ENCODE measurements at regions of chr4 and their contacts with region 1.

Region 1: DNA sequence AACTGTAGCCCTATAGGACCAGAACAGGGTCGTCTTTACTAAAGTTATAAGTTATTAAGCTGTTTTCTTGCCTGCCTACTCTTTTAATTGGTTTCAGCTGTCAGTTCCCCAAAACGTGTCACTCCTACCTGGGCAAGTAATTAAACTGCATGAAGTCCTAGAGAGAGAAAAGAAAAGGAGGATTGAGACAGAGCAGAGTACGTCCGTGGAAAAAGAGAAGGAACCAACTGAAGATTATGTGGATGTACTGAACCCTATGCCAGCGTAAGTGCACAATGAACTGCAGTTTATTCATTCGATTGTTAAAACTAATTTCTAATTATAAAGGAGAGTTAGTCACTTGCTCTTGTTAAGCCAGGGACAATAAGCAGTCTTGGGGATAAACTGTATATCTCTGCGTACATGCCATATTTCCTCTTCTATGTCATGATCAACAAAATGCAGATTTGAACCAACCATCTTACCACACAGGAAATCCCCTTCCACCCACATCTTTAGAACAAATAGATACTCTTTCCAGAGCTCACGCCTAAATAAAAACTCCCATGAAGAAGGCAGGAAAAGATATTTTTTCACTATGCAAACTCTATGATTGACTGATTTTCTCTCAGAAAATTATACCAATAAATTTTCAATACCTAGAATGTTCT is 22.8 kb downstream of the STAP1 start:
- DNase-seq: peak; percentile 83
- H3K4me3 Mint-ChIP-seq: peak overlapping the region; percentile 79
- H3K27ac Mint-ChIP-seq: peak overlapping the region; percentile 93
- H3K4me1 Mint-ChIP-seq: peaks cover 27% of the 10 kb centered on the region
- H3K27me3 Mint-ChIP-seq: no peaks in the 10 kb centered on the region

Region 2: DNA sequence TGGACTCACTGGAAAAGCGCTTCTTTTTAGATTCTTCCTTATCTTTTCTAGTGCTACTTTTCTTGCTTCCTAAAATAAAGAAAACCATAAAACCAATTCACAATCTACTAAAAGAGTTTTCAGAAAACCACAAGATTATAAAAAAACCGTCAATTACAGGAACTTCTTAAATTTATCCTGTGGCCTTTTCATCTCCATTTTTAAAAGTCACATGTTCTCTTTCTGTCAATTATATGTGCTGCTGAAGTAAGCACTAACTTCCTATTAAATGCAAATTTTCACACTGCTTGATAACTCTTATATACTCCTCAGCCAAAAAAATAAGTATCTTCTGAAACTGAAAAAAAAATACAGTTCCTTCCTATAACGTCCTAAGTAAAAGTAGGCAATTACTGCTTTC is 68.8 kb before region 1 on chr4:
- intact Hi-C with region 1: no loop called
- DNase-seq: no peak
- H3K4me3 Mint-ChIP-seq: no peak overlapping the region
- H3K27ac Mint-ChIP-seq: no peak overlapping the region
- H3K4me1 Mint-ChIP-seq: peaks cover 15% of the 10 kb centered on the region
- H3K27me3 Mint-ChIP-seq: no peaks in the 10 kb centered on the region

Region 3: GRCh38 chr4:67545199-67546003 is 35.9 kb before region 1 on chr4 and contains the start of gene CENPC:
- intact Hi-C with region 1: loop called (anchors 1 kb)
- DNase-seq: peak; percentile 98
- H3K4me3 Mint-ChIP-seq: peak within 1 kb of the TSS; percentile 99
- H3K27ac Mint-ChIP-seq: peak within 1 kb of the TSS; percentile 99
- H3K4me1 Mint-ChIP-seq: peaks cover 30% of the 10 kb centered on the region
- H3K27me3 Mint-ChIP-seq: no peaks in the 10 kb centered on the region
- total RNA-seq, gene CENPC: 25.7 and 28.3 TPM in 2 replicates

Region 4: DNA sequence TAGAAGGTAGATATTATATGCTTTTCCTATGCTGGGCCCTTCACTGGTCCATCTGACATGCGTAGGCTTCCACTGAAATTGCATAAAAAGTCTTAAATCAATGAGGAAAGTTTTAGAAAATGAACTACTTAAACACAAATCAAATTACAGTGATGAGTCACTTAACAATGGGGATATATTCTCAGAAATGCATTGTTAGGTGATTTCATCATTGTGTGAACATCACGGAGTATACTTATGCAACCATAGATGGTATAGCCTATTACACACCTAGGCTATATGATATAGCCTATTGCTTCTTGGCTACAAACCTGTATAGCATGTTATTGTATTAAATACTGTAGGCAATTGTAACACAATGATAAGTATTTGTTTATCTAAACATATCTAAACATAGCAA is 12.5 kb before region 1 on chr4:
- intact Hi-C with region 1: loop called (anchors 1 kb)
- DNase-seq: no peak
- H3K4me3 Mint-ChIP-seq: no peak overlapping the region
- H3K27ac Mint-ChIP-seq: no peak overlapping the region
- H3K4me1 Mint-ChIP-seq: peaks cover 33% of the 10 kb centered on the region
- H3K27me3 Mint-ChIP-seq: no peaks in the 10 kb centered on the region

Region 5: DNA sequence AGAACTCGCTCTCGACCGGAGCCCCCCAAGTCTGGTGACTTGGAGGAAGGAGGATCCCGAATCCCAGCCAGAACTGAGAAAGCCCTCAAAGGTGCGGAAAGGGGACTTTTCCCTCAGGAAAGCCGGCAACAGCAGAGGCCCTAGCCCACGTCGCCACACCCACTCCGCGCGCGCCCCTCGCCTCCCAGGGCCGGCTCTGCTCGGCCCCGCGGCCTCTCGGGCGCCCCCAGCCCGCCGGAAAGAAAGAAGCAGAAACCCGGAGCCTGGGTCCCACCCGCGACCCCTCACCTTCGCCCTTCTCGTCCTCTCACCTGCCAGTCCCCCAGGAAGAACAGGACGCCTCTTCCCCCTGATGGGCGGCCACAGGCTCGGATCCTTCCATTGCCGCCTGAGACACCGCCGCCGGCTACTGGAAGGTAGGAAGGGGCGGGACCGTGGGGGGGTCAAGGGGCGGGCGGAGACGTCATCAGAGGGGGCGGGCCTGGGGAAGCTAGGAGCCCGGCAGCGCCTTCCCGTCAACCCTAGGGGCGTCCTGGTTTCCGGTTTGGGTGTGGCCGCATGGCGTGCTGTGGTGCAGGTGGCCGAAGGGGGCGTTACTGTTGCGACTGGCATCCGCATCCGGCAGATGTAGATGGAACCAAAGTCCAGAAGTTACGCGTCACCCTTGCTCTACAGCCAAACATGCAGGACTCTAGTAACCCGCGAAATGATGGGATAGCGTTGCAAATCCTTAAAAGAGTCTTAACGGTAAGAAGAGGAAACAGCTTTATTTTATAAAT is 119.6 kb after region 1 on chr4 and contains the start of gene UBA6:
- intact Hi-C with region 1: loop called (anchors 1 kb)
- DNase-seq: peak; percentile 98
- H3K4me3 Mint-ChIP-seq: peak within 1 kb of the TSS; percentile 96
- H3K27ac Mint-ChIP-seq: peak within 1 kb of the TSS; percentile 97
- H3K4me1 Mint-ChIP-seq: peaks cover 46% of the 10 kb centered on the region
- H3K27me3 Mint-ChIP-seq: no peaks in the 10 kb centered on the region
- total RNA-seq, gene UBA6: 78.2 and 85.4 TPM in 2 replicates

Measured in activated CD4-positive, alpha-beta T cell treated with anti-CD3 and anti-CD28 coated beads, Interleukin-2, amount 10 ng/mL, durations not matched to agents 24 days and 14 days (primary cell).